Naive thymus-derived CD4-positive, alpha-beta T cell (primary cell): ENCODE measurements at regions of chr14 and their contacts with region 1.

Region 1: DNA sequence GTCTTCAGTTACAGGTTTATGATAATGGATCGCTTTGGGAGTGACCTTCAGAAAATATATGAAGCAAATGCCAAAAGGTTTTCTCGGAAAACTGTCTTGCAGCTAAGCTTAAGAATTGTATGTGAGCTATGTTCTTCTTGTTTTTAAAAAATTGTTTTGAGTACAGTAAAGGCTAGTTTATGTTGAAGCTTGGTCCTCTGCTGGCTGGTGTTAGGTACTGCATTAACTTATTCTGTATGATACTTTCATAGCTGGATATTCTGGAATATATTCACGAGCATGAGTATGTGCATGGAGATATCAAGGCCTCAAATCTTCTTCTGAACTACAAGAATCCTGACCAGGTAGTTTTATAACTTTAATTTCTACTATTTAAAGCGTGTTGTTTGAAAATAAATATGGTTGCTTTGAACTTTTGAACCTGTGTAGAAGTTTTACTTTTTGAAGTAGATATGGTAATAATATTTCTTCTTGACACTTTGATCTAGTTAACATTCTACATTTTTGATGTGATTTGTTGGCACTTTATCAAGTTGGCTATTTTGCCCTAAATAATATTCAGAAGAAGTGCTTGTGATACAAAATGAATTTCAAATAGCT is 55.7 kb downstream of the VRK1 start:
- DNase-seq: peak in 5 of 9 donors; percentile 1 to 29 (median 7)
- ATAC-seq: peak; percentile 73
- H3K4me3 ChIP-seq: no peak overlapping the region
- H3K4me3 Mint-ChIP-seq: no peak overlapping the region
- H3K27ac ChIP-seq: no peak overlapping the region
- H3K27ac Mint-ChIP-seq: no peak overlapping the region
- H3K4me1 ChIP-seq: no peaks in the 10 kb centered on the region
- H3K4me1 Mint-ChIP-seq: peaks cover 3 to 24% (median 12%) of the 10 kb centered on the region in 7 donors
- H3K27me3 ChIP-seq: no peaks in the 10 kb centered on the region
- H3K27me3 Mint-ChIP-seq: no peaks in the 10 kb centered on the region

Region 2: DNA sequence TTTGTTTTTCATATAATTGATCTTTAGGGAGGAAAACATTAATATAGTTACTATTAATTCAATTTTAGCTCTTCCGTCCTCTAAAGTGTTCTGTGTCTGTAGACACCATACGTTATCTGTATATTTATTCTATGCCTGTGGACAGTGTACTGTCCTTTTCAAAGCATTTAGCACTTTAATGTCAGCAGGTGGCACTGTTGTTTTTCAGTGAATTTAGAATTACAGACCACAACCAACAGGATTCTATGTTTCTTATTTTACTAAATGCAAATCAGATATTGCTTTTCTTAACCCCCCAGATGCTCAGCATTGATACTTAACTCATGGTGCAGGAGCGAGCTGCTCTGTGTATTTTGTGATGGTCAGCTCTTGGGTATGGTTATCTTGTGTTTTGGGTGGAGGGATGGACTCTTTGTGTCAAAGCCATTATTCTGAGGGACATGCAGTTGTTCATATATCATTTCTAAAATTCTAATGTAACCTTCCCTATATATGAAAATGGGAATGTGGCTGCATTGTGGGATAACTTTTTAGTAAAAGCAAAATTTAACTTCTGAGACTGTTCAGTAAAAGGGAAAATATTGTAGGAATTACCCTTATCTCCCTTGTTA is 285.5 kb before region 1 on chr14:
- CTCF ChIA-PET with region 1: no interaction called
- POLR2A ChIA-PET with region 1: no interaction called
- intact Hi-C with region 1: loop called in 1 of 2 experiments (anchors 10 kb)
- DNase-seq: peak in 5 of 9 donors; percentile 16 to 30 (median 25)
- ATAC-seq: peak; percentile 52
- H3K4me3 ChIP-seq: no peak overlapping the region
- H3K4me3 Mint-ChIP-seq: no peak overlapping the region
- H3K27ac ChIP-seq: no peak overlapping the region
- H3K27ac Mint-ChIP-seq: peak overlapping the region in 1 of 9 donors; percentile 29
- H3K4me1 ChIP-seq: no peaks in the 10 kb centered on the region
- H3K4me1 Mint-ChIP-seq: peaks cover 0 to 10% (median 5%) of the 10 kb centered on the region in 7 donors
- H3K27me3 ChIP-seq: no peaks in the 10 kb centered on the region
- H3K27me3 Mint-ChIP-seq: no peaks in the 10 kb centered on the region

Region 3: GRCh38 chr14:97120611-97121031 is 267.7 kb after region 1 on chr14:
- CTCF ChIA-PET with region 1: interaction called, 3 read pairs
- POLR2A ChIA-PET with region 1: no interaction called
- intact Hi-C with region 1: loop called in 1 of 2 experiments (anchors 10 kb)
- DNase-seq: peak; percentile 10 to 69 (median 48)
- ATAC-seq: peak; percentile 85
- H3K4me3 ChIP-seq: no peak overlapping the region
- H3K4me3 Mint-ChIP-seq: peak overlapping the region; percentile 56 to 81 (median 70)
- H3K27ac ChIP-seq: peak overlapping the region; percentile 57
- H3K27ac Mint-ChIP-seq: peak overlapping the region; percentile 75 to 96 (median 92)
- H3K4me1 ChIP-seq: peaks cover 22 to 33% of the 10 kb centered on the region in 2 donors
- H3K4me1 Mint-ChIP-seq: peaks cover 26 to 58% (median 37%) of the 10 kb centered on the region in 7 donors
- H3K27me3 ChIP-seq: no peaks in the 10 kb centered on the region
- H3K27me3 Mint-ChIP-seq: no peaks in the 10 kb centered on the region